ENCODE measurements at regions of chr9 and their contacts with region 1.

Region 1: DNA sequence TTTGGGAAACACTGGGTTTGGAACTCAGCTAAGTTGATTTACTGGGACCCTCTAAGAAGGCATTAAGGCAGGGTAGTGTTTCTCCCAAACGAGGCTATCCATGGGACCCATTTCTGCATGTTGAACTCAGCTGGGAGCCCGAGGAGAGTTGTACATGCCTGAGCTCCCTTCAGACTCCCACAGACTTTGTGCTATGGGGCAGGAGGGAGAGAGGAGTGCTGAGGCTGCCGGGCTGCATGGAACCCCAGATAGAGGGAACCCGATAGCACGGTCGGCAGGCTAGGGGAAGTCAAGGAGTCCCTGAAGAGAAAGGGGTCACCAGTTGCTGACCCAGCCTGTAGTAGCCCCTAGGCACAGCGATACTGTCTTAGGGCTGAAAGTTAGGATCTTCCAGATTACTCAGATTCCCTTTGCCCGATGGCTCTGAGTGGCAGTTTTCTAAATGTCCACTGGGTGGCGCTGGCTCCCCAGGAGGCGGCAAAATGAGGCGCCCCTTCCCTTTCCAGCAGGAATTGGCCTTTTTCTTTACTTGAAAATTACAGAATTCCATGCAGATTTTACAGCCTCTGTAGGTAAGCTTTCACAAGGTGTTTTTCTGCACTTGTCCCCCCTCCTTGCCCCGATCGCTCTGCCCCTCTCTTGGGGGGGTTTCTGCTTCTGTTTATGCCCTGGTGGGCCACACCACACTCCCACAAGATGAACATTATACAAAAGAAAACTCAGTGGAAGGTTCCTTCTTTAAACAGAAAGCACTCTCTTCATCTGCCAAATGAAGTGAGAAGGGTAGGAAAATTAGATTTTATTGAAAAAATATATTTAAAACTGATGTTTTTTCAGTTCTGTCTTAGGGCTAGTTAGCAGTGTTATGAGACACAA is 17.8 kb downstream of the NANS start:
- DNase-seq: peak; percentile 88
- H3K4me3 ChIP-seq: no peak overlapping the region
- H3K27ac ChIP-seq: peak overlapping the region; percentile 93
- H3K4me1 ChIP-seq: peaks cover 11% of the 10 kb centered on the region
- H3K27me3 ChIP-seq: no peaks in the 10 kb centered on the region
- CTCF ChIP-seq: peak; percentile 96

Region 2: DNA sequence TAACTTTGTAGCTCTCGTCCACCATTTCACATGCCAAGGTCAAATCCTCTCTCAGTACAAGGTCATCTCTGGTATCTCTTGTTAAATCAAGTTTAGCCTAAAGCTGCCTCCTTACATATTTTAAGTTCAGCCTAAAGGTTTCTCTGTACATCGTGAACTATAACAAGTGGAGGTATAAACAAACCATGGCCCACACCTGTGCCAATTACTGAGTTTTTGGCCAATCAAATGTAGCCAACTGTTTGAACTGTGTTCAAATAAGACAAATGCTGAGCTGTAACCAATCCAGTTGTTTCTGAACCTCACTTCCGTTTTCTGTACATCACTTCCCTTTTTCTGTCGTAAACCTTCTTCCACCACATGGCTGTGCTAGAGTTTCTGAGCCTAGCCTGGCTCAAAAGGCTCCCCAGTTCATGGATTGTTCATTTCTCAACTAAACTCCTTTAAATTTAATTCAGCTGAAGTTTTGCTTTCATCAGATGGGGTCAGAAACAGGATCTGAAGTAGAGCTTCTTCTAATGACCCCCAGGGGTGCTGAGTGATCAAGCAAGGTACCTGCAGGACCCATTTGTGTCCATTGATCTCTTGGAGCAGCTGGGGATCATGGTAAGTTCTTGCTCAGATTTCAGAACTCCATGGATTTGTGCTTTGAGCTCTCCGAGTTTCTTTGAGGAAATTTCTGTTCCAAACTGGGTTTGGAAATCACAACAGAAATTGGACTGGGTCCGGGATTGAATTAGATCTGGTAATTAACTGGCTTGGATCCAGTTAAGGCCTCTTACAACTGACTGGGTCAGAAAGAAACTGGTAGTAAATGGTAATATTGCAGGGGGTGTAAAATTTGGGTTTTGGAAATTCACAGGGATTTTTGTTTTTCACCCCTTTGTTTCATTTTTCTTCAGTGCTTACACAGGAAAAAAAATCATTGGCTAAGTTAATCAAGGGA is 28.8 kb before region 1 on chr9:
- intact Hi-C with region 1: no loop called
- DNase-seq: no peak
- H3K4me3 ChIP-seq: no peak overlapping the region
- H3K27ac ChIP-seq: no peak overlapping the region
- H3K4me1 ChIP-seq: no peaks in the 10 kb centered on the region
- H3K27me3 ChIP-seq: no peaks in the 10 kb centered on the region
- CTCF ChIP-seq: no peak

Region 3: GRCh38 chr9:98118640-98119601 is 44.6 kb after region 1 on chr9 and contains the start of gene TRIM14:
- intact Hi-C with region 1: loop called (anchors 5 kb)
- DNase-seq: peak; percentile 87
- H3K4me3 ChIP-seq: peak within 1 kb of the TSS; percentile 80
- H3K27ac ChIP-seq: peak within 1 kb of the TSS; percentile 96
- H3K4me1 ChIP-seq: peaks cover 4% of the 10 kb centered on the region
- H3K27me3 ChIP-seq: no peaks in the 10 kb centered on the region
- CTCF ChIP-seq: no peak
- total RNA-seq, gene TRIM14: 44.6 to 62.0 TPM

Region 4: GRCh38 chr9:98201102-98201501 is 126.7 kb after region 1 on chr9:
- intact Hi-C with region 1: loop called (anchors 5 kb)
- DNase-seq: no peak
- H3K4me3 ChIP-seq: no peak overlapping the region
- H3K27ac ChIP-seq: no peak overlapping the region
- H3K4me1 ChIP-seq: no peaks in the 10 kb centered on the region
- H3K27me3 ChIP-seq: no peaks in the 10 kb centered on the region
- CTCF ChIP-seq: no peak

Region 5: GRCh38 chr9:98263482-98264357 is 189.4 kb after region 1 on chr9:
- intact Hi-C with region 1: loop called (anchors 10 kb)
- DNase-seq: peak; percentile 87
- H3K4me3 ChIP-seq: no peak overlapping the region
- H3K27ac ChIP-seq: no peak overlapping the region
- H3K4me1 ChIP-seq: no peaks in the 10 kb centered on the region
- H3K27me3 ChIP-seq: no peaks in the 10 kb centered on the region
- CTCF ChIP-seq: peak; percentile 90

Measured in colonic mucosa (tissue), 4 donors.